H1 (cell line): ENCODE measurements at regions of chr3 and their contacts with region 1.

Region 1: GRCh38 chr3:122942937-122943827 is 84.4 kb downstream of the SEMA5B start:
- DNase-seq: peak; percentile 49 to 96
- H3K4me3 ChIP-seq: 0 out of 8 replicates have a peak overlapping the region, but pooled peaks of 1 of the 4 experiments have one; percentile 10
- H3K27ac ChIP-seq: no peak overlapping the region
- H3K4me1 ChIP-seq: peaks cover 2 to 18% (median 4%) of the 10 kb centered on the region in 4 experiments; a peak in 6 of 7 replicates
- H3K27me3 ChIP-seq: no peaks in the 10 kb centered on the region; a peak in 3 of 7 replicates
- CTCF ChIP-seq: peak; percentile 78 to 99 (median 96)
- EP300 ChIP-seq: no peak
- POLR2A ChIP-seq: no peak
- RAD21 ChIP-seq: peak; percentile 95 to 98

Region 2: DNA sequence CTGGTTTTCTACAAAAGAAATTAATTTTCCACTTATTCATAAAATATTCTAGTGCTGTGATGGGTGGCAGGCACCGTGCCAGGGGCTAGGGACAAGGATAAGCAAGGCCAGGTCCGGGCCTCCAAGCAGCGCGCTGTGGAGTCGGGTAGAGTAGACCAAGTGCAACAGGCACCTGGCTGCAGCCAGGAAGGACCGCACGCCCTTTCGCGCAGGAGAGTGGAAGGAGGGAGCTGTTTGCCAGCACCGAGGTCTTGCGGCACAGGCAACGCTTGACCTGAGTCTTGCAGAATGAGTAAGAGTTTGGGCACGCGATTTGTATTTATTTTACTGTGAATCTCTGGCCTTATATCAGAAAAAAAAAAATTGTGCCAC is 759.7 kb before region 1 on chr3 and contains the start of gene CASR:
- CTCF ChIA-PET with region 1: no interaction called
- POLR2A ChIA-PET with region 1: no interaction called
- DNase-seq: peak in 1 of 2 experiments; percentile 55
- H3K4me3 ChIP-seq: peak within 1 kb of the TSS; percentile 52 to 76 (median 70)
- H3K27ac ChIP-seq: no peak within 1 kb of the TSS
- H3K4me1 ChIP-seq: no peaks in the 10 kb centered on the region; a peak in 1 of 7 replicates
- H3K27me3 ChIP-seq: peaks cover 0 to 44% (median 35%) of the 10 kb centered on the region in 4 experiments; a peak in 6 of 7 replicates
- CTCF ChIP-seq: no peak
- EP300 ChIP-seq: no peak
- POLR2A ChIP-seq: no peak
- RAD21 ChIP-seq: no peak
- total RNA-seq, gene CASR: 0.25 and 0.58 TPM in 2 replicates

Region 3: GRCh38 chr3:122890077-122890719 is 53.0 kb before region 1 on chr3:
- CTCF ChIA-PET with region 1: interaction called, 10 read pairs
- POLR2A ChIA-PET with region 1: no interaction called
- DNase-seq: peak; percentile 43 to 61
- H3K4me3 ChIP-seq: no peak overlapping the region; a peak in 1 of 8 replicates
- H3K27ac ChIP-seq: no peak overlapping the region
- H3K4me1 ChIP-seq: peaks cover 3 to 14% (median 9%) of the 10 kb centered on the region in 4 experiments; a peak in 6 of 7 replicates
- H3K27me3 ChIP-seq: no peaks in the 10 kb centered on the region
- CTCF ChIP-seq: no peak
- EP300 ChIP-seq: no peak
- POLR2A ChIP-seq: peak in 1 of 2 experiments; percentile 42; a peak in 1 of 3 replicates
- RAD21 ChIP-seq: no peak

Region 4: DNA sequence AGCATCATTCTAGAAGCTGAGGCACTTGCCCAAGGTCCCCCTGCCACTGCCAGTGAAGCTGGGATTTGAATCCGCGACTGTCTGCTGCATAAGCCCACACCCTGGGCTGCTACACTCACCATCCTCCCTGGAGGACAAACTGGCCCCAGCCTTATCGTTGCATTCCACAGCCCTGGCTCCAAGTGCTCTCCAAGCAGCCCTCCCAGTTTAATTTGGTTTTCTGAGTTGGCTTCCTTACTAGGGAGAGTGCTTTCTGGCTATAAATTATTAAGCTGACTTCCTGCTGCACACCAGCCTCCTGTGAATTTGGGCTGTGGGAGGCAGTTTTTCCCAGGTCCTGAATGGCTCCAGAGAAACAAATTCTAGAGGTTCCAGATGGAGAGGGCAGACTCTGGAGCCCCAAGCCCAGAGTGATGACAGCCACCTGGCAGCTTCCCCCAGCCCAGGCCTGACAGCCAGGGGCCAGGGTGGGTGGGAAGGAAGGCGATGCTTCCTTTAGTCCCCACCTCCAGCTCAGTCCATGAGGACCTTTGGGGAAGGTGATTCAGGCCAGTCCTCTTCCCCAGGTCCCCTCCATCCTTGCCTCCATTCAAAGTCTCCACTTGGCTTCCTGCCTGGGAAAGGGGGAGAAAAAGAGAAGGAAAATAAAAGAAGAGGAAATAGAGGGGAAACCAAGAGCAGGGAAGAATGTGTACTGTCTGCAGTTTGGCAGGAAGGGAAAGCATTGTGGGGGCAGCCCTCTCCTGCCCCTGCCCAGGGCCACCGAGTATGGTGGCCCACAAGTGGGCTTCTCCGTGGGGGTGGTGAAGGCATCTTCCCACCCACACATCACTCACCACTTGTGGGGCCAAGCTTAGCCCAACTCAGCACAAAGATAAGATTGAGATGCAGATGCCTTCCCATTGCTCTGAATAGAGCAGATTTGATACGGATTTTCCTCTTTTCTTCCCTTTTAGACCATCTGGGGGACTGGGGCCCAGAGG is 14.8 kb after region 1 on chr3:
- CTCF ChIA-PET with region 1: interaction called, 34 read pairs
- POLR2A ChIA-PET with region 1: interaction called, 4 read pairs
- DNase-seq: no peak
- H3K4me3 ChIP-seq: no peak overlapping the region
- H3K27ac ChIP-seq: no peak overlapping the region
- H3K4me1 ChIP-seq: peaks cover 1 to 32% (median 17%) of the 10 kb centered on the region in 4 experiments
- H3K27me3 ChIP-seq: no peaks in the 10 kb centered on the region
- CTCF ChIP-seq: no peak
- EP300 ChIP-seq: no peak
- POLR2A ChIP-seq: no peak
- RAD21 ChIP-seq: no peak

Region 5: GRCh38 chr3:122975163-122975923 is 32.2 kb after region 1 on chr3:
- CTCF ChIA-PET with region 1: interaction called, 17 read pairs
- POLR2A ChIA-PET with region 1: no interaction called
- DNase-seq: no peak
- H3K4me3 ChIP-seq: peak overlapping the region in 1 of 4 experiments; percentile 12; a peak in 1 of 8 replicates
- H3K27ac ChIP-seq: no peak overlapping the region
- H3K4me1 ChIP-seq: peaks cover 7 to 46% (median 31%) of the 10 kb centered on the region in 4 experiments
- H3K27me3 ChIP-seq: no peaks in the 10 kb centered on the region
- CTCF ChIP-seq: no peak
- EP300 ChIP-seq: no peak
- POLR2A ChIP-seq: no peak
- RAD21 ChIP-seq: no peak

Region 6: GRCh38 chr3:123002100-123002748 is 59.0 kb after region 1 on chr3:
- CTCF ChIA-PET with region 1: interaction called, 15 read pairs
- POLR2A ChIA-PET with region 1: no interaction called
- DNase-seq: no peak
- H3K4me3 ChIP-seq: no peak overlapping the region
- H3K27ac ChIP-seq: no peak overlapping the region
- H3K4me1 ChIP-seq: peaks cover 10 to 24% (median 10%) of the 10 kb centered on the region in 4 experiments; a peak in 5 of 7 replicates
- H3K27me3 ChIP-seq: peaks cover 0 to 2% (median 0%) of the 10 kb centered on the region in 4 experiments; a peak in 2 of 7 replicates
- CTCF ChIP-seq: no peak
- EP300 ChIP-seq: no peak
- POLR2A ChIP-seq: no peak
- RAD21 ChIP-seq: no peak

Region 7: GRCh38 chr3:123028233-123028828 is 85.1 kb after region 1 on chr3:
- CTCF ChIA-PET with region 1: interaction called, 151 read pairs
- POLR2A ChIA-PET with region 1: interaction called, 4 read pairs
- DNase-seq: no peak
- H3K4me3 ChIP-seq: peak overlapping the region; percentile 76 to 90 (median 82)
- H3K27ac ChIP-seq: no peak overlapping the region
- H3K4me1 ChIP-seq: peaks cover 0 to 18% (median 10%) of the 10 kb centered on the region in 4 experiments; a peak in 6 of 7 replicates
- H3K27me3 ChIP-seq: peaks cover 0 to 18% (median 10%) of the 10 kb centered on the region in 4 experiments; a peak in 5 of 7 replicates
- CTCF ChIP-seq: peak in 2 of 3 experiments; percentile 36 to 70; a peak in 3 of 4 replicates
- EP300 ChIP-seq: no peak
- POLR2A ChIP-seq: no peak
- RAD21 ChIP-seq: peak; percentile 76 to 81